Activated naive CD4-positive, alpha-beta T cell treated with anti-CD3 and anti-CD28 coated beads for 36 hours (primary cell): ENCODE measurements at regions of chr11 and their contacts with region 1.

Region 1: GRCh38 chr11:102488208-102488607 is 35.6 kb upstream of the TMEM123 start:
- DNase-seq: no peak
- H3K4me3 Mint-ChIP-seq: peak overlapping the region; percentile 13
- H3K27ac Mint-ChIP-seq: peak overlapping the region; percentile 42
- H3K4me1 Mint-ChIP-seq: peaks cover 63% of the 10 kb centered on the region
- H3K27me3 Mint-ChIP-seq: no peaks in the 10 kb centered on the region

Region 2: GRCh38 chr11:102256251-102256650 is 232.0 kb before region 1 on chr11:
- CTCF ChIA-PET with region 1: no interaction called
- intact Hi-C with region 1: no loop called
- DNase-seq: no peak
- H3K4me3 Mint-ChIP-seq: no peak overlapping the region
- H3K27ac Mint-ChIP-seq: no peak overlapping the region
- H3K4me1 Mint-ChIP-seq: no peaks in the 10 kb centered on the region
- H3K27me3 Mint-ChIP-seq: no peaks in the 10 kb centered on the region

Region 3: GRCh38 chr11:102416976-102417375 is 71.2 kb before region 1 on chr11:
- CTCF ChIA-PET with region 1: interaction called, 3 read pairs
- intact Hi-C with region 1: loop called (anchors 1 kb)
- DNase-seq: peak; percentile 38
- H3K4me3 Mint-ChIP-seq: peak overlapping the region; percentile 34
- H3K27ac Mint-ChIP-seq: peak overlapping the region; percentile 84
- H3K4me1 Mint-ChIP-seq: peaks cover 92% of the 10 kb centered on the region
- H3K27me3 Mint-ChIP-seq: no peaks in the 10 kb centered on the region

Region 4: GRCh38 chr11:102430158-102430836 is 57.9 kb before region 1 on chr11:
- CTCF ChIA-PET with region 1: no interaction called
- intact Hi-C with region 1: no loop called
- DNase-seq: peak; percentile 86
- H3K4me3 Mint-ChIP-seq: peak overlapping the region; percentile 44
- H3K27ac Mint-ChIP-seq: peak overlapping the region; percentile 95
- H3K4me1 Mint-ChIP-seq: peaks cover 75% of the 10 kb centered on the region
- H3K27me3 Mint-ChIP-seq: no peaks in the 10 kb centered on the region

Region 5: GRCh38 chr11:102457865-102458264 is 30.3 kb before region 1 on chr11:
- CTCF ChIA-PET with region 1: interaction called, 6 read pairs
- intact Hi-C with region 1: loop called (anchors 1 kb)
- DNase-seq: no peak
- H3K4me3 Mint-ChIP-seq: peak overlapping the region; percentile 17
- H3K27ac Mint-ChIP-seq: peak overlapping the region; percentile 64
- H3K4me1 Mint-ChIP-seq: peaks cover 74% of the 10 kb centered on the region
- H3K27me3 Mint-ChIP-seq: no peaks in the 10 kb centered on the region

Region 6: DNA sequence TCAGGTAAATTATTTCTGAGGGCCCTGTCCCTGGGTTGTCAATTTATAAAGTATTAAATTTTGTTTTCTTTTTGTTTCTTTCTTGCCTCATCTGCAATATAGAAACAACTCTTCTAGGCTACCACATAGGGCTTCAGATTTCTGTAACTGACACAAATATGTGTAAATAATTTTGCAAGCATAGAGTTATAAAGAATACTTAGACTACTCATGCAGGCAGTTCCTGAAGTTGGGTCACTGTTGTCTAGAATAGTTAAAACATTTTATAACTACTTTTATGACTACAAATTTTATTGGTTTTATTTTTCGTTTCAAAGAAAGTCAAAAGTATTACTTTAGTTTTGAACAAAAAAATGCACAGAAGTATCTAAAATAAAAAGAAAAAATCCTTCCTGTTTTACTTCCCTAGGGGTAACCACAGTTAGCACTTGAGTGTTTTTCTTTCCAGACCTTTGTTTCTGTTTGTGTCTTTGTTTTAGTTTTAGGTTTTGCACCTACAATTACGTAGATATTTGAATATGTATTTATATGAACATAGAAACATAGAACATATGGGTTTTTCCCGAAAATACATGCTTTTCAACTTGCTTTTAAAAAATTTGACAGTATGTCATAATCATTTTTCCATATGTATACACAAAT is 23.2 kb before region 1 on chr11:
- CTCF ChIA-PET with region 1: interaction called, 4 read pairs
- intact Hi-C with region 1: loop called (anchors 1 kb)
- DNase-seq: no peak
- H3K4me3 Mint-ChIP-seq: no peak overlapping the region
- H3K27ac Mint-ChIP-seq: peak overlapping the region; percentile 11
- H3K4me1 Mint-ChIP-seq: peaks cover 75% of the 10 kb centered on the region
- H3K27me3 Mint-ChIP-seq: no peaks in the 10 kb centered on the region

Region 7: DNA sequence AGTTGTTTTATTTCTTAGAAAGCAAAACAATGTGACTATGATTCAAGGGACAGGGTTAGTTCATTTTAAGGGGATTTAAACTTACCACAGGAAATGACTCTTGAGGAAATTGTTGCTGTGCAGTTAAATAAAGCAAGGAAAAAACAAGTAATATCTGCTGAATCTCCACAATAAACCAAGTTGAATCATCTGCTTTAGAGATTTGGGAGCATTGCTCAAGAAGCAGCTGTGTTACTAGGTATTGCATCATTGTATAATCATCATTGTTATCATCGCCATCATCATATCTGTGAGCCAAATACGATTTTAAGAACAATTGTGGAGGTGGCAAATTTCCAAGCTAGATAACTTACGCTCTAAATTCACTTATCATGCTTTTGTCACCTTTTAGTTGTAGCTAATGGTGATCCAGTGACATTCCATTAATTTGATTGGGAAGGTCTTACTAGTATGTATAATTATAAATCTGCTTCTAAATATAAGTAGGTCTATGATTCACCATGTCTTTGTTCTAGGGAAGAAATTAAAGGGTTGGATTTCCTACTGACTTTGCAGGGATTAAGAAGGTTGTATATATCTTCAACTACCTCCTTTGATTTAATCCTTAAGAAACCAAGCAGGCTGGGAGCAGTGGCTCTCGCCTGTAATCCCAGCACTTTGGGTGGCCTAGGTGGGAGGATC is 272.3 kb after region 1 on chr11:
- CTCF ChIA-PET with region 1: no interaction called
- intact Hi-C with region 1: no loop called
- DNase-seq: no peak
- H3K4me3 Mint-ChIP-seq: no peak overlapping the region
- H3K27ac Mint-ChIP-seq: no peak overlapping the region
- H3K4me1 Mint-ChIP-seq: peaks cover 2% of the 10 kb centered on the region
- H3K27me3 Mint-ChIP-seq: peaks cover 20% of the 10 kb centered on the region